PC-3 (cell line): ENCODE measurements at regions of chr1 and their contacts with region 1.

Region 1: DNA sequence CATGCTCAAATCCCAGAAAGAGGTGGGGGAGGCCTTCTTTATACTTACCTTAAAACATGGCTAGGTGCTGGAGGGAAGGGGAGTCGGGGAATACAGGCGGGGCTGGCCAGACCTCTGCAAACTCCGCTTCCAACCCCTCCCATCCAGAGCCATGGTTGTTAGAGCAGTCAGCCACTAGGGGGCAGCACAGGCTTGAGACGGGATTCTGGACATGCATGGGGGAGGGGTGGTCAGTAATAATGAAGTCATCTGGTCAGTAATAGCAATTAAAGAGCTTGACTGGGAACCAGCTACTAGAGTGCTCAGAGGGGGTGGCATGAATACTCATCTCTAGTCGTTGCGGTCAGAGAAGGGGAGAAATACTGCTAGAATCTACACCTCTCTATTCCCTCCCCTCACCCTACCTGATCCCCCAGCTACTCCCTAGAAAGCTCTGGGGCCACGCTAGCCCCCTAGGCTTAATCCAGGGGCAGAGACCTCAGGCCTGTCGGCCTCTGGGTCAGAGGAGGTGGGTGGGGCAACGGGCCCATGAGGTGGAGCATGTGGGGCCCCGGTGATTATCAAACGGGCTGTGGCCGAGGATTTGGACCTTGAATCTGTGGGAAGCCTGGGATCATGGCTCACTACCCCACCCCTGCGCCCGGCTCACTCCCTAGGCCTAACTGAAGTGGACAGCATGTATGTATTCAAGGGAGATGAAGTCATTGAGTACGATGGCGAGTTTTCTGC is 2.9 kb downstream of the CASQ1 start:
- DNase-seq: peak; percentile 96
- ATAC-seq: peak; percentile 88
- H3K4me3 ChIP-seq: no peak overlapping the region
- H3K27ac ChIP-seq: no peak overlapping the region
- H3K4me1 ChIP-seq: peaks cover 9% of the 10 kb centered on the region; the same call in 1 of the 2 replicates
- H3K27me3 ChIP-seq: no peaks in the 10 kb centered on the region
- CTCF ChIP-seq: peak; percentile 98

Region 2: DNA sequence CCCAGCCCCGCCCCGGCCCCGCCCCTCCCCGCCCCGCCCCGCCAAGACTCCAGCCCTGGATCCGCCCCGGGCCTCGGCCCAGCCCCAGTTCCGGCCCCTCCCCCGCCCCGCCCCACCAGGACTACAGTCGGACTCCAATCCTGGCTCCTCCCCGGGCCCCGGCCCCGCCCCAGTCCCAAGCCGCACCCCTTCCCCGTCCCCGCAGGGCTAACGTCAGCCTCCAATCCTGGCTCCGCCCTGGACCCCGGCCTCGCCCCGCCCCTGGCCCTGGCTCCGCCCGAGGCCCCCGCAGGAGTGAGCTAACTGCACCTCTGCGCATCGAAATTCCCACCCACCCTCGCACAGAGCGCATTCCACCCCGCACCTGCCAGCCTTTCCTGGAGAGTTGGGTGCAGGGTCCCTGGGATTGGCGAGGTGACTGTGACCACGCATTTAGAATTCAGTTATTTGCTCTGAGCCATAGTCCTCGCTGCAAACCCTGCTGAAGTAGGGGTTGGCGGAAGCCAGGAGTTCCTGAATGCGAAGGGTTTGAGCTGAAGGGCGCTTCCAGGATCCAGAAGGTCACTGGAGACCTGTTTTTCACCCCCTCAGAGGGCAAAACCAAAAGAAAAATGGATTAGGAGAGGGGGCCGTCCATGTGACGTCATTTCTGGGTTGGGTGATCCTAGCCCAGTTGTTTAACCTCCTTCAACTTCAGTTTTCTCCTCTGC is 94.2 kb before region 1 on chr1:
- CTCF ChIA-PET with region 1: interaction called, 7 read pairs
- POLR2A ChIA-PET with region 1: no interaction called
- intact Hi-C with region 1: loop called (anchors 1 kb)
- DNase-seq: peak; percentile 96
- ATAC-seq: peak; percentile 81
- H3K4me3 ChIP-seq: peak overlapping the region; percentile 77
- H3K27ac ChIP-seq: 0 out of 2 replicates have a peak overlapping the region, but pooled peaks have one; percentile 10
- H3K4me1 ChIP-seq: peaks cover 31% of the 10 kb centered on the region
- H3K27me3 ChIP-seq: no peaks in the 10 kb centered on the region
- CTCF ChIP-seq: no peak

Region 3: GRCh38 chr1:160244209-160244608 is 51.0 kb after region 1 on chr1:
- CTCF ChIA-PET with region 1: interaction called, 7 read pairs
- POLR2A ChIA-PET with region 1: no interaction called
- intact Hi-C with region 1: loop called (anchors 2 kb)
- DNase-seq: peak; percentile 64
- ATAC-seq: peak; percentile 88
- H3K4me3 ChIP-seq: no peak overlapping the region
- H3K27ac ChIP-seq: no peak overlapping the region
- H3K4me1 ChIP-seq: peaks cover 19% of the 10 kb centered on the region
- H3K27me3 ChIP-seq: no peaks in the 10 kb centered on the region
- CTCF ChIP-seq: no peak

Region 4: DNA sequence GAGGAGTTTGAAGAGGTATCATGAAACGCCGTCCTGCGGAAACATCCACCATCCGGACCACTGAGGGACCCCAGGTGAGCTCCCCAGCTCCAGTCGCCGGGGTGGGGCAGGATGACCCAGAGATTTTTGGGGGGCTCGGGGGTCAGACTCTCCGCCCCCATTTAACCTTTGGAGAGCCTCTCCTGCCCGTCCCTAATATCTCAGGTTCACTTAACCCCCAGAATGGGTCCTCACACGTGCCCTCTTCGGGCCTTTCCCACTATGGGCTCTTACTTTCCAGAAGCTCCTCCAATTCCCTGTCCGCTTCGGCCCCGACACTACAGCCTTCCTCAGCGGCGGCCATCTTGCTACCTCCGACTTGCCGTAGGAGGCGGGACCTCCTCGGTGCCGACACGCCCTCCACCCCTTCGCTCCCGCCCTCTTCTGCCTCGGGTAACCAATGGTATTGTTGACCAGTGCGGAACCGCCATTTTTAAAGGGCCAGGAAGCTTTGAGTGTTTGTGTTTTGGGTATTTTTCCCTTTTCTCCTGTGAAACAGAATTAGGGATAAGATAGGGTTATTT is 91.6 kb after region 1 on chr1 and contains the start of gene PEX19:
- CTCF ChIA-PET with region 1: interaction called, 4 read pairs
- POLR2A ChIA-PET with region 1: no interaction called
- intact Hi-C with region 1: loop called (anchors 1 kb)
- DNase-seq: peak; percentile 94
- ATAC-seq: peak; percentile 95
- H3K4me3 ChIP-seq: peak within 1 kb of the TSS; percentile 93
- H3K27ac ChIP-seq: peak within 1 kb of the TSS; percentile 41
- H3K4me1 ChIP-seq: peaks cover 18% of the 10 kb centered on the region
- H3K27me3 ChIP-seq: no peaks in the 10 kb centered on the region
- CTCF ChIP-seq: no peak
- total RNA-seq, gene PEX19: 63.2 and 65.4 TPM in 2 replicates

Region 5: GRCh38 chr1:160376525-160377131 is 183.4 kb after region 1 on chr1:
- CTCF ChIA-PET with region 1: interaction called, 19 read pairs
- POLR2A ChIA-PET with region 1: no interaction called
- intact Hi-C with region 1: no loop called
- DNase-seq: peak; percentile 78
- ATAC-seq: peak; percentile 80
- H3K4me3 ChIP-seq: no peak overlapping the region
- H3K27ac ChIP-seq: no peak overlapping the region
- H3K4me1 ChIP-seq: peaks cover 7% of the 10 kb centered on the region; the same call in 1 of the 2 replicates
- H3K27me3 ChIP-seq: no peaks in the 10 kb centered on the region
- CTCF ChIP-seq: peak; percentile 97